Right ventricle myocardium inferior (tissue), 1 donor: ENCODE measurements at regions of chr17 and their contacts with region 1.

Region 1: DNA sequence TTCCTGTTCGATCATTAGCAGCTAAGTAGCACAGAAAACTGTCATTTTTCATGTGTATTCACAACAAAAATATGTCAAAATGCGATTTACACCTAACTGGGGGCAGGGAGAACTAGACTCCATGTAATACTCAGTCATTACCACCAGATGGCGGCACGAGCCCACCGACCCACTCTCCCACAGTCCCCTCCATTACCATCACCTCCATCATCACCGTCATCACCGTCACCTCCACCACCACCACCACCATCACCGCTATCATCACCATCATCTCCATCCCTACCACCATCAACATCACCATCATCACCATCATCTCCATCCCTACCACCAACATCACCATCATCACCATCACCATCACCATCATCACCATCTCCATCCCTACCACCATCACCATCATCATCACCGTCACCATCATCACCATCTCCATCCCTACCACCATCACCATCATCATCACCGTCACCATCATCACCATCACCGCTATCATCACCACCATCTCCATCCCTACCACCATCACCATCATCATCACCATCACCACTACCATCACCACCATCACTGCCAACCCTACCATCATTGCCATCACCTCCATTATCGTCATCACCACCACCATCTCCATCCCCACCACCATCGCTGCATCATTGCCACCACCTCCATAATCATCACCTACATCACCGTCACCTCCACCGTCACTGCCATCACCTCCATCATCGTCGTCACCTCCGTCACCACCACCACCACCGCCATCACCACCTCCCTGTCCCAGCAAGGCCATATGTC is 14.4 kb downstream of the NDUFAF8 start:
- DNase-seq: peak; percentile 82
- ATAC-seq: peak; percentile 51

Region 2: DNA sequence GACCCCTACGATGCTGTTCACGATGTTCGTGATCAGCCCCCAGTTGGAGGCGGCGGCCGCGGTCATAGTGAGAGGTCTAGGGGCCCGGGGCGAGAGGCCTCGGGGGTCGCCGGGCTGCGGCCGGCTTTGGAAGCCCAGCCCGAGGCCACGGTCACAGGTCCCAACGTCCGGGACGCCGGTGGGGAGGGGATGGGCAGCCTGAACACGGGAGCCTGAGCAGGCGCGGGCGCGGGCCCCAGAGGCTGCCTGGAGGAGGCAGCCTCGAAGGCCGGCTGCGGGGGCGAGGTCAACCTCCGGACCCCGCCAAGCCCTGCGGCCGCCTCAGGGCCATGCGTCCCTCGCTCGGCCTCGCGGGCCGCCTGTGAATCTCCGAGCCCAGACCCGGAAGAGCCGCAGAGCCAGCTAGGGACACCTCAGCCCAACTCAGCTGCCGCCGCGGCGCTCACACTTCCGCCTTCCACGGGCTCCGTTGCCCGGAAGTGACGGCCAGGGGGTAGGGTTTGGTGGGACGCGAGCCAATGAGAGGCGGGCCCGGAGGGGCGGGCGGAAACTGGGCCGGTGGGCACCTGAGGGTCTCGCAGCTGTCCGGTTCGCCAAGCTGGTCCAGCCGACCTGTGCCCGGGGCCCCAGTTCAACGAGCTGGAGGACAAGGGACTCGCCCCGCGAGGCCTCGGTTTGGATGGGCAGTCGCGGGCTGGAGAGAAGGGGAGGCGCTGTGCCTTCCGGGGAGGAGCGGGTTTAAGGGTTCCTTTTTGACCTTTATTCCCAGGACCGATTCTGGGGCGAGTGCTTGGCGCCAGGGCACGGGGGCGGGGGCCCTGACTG is 41.5 kb after region 1 on chr17 and contains the start of gene SLC38A10:
- intact Hi-C with region 1: loop called (anchors 5 kb)
- DNase-seq: peak; percentile 97
- ATAC-seq: peak; percentile 91
- total RNA-seq, gene SLC38A10: 44.6 TPM

Region 3: DNA sequence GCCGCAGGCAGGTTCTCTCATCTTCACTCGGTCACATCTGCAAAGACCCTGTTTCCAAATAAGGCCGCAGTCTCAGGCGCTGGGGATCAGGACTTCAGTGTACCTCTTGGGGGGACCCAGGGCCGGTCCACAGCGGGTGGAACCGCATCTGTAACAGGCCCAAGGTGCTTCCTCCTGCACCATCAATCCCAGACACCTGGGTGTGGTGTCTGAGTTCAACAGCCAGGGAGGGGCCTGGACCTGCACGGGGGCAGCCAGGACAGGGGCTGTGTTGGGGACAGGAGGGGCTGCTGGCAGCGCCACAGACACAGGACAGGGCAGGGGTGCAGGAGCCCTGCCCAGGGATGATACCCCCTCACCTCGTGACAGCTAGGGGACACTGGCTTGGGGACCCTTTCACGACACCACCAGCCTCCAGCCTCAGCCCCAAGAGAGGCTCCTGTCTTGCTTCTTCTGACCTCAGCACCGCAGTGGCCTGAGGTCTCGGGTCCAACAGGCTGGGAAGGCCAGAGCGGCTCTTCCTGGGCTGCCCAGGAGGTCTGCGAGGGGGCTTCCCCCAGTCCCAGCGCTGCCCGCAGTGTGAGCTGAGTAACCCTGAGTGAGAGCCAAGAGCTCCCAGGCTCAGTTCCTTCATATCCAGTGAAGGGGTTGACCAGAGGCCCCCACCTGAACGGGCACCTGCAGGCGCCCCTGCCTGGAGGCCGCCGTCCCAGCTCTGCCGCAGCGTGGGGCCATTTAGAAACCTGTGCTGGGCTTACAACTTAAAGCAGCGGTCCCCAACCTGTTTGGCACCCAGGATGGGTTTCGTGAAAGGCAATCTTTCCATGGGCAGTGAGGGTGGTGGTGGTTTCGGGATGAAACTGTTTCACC is 111.0 kb after region 1 on chr17:
- intact Hi-C with region 1: no loop called
- DNase-seq: peak; percentile 37
- ATAC-seq: no peak

Region 4: DNA sequence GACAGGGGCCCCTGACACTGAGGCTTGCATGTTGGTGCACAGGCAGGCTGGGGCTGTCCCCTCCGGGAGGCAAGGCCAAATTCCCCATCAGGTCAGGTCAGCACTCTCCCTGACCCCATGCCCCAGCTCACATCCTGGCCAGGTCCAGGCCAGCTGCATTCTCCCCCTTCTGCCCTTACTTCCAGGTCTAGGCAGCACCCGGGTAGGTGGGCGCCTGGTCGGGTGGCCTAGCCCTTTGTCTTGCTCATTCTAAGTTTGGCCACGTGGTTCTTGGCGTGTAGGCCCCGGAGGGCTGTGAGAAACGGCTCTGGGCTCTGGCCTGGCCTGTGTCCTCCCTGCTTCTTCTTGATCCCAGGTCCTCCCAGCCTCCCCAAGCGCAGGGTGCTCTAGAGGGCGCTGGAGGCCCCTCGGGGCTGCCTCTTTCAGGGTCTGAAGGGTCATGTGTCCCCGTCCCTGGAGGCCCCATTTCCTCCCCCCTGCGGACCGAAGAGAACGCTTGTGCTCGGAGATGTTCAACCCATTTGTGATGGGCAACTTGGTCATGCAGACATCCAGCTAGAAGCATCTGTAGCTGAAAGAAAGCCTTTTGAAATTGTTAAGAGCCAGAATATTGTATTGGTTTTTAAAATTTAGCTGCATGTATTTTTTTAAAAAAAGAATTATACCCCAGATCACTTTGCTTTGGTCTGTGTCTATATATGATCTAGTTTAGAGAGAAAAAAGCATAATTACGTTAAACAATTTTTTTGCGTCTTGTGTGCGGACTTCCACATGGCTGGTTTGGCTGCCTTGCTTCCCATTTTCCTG is 148.4 kb after region 1 on chr17:
- intact Hi-C with region 1: loop called (anchors 5 kb)
- DNase-seq: no peak
- ATAC-seq: no peak

Region 5: DNA sequence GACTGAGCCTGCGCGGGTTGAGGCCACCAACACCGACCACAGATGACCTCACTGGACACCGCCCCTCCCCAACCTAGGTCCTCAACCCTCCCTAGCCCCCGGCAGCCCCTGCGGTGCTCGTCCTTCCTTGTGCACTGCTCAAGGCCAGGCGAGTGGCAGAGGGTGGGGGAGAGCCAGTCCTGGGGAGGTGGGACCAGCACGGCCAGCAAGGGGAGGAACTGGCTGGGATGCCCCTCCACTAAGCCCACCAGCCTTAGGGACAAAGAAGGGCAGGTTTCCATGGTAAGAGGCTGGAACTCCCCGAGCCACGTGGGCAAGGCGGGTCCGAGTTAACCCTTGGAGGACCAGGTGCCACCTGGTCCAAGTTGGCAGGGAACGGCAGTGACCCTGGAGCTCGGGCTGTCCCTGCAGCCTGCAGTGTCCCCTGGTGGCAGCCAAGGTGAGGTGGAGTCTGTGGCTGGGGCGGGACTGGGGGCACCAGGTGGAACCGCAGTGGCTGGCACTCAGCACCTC is 283.9 kb after region 1 on chr17:
- intact Hi-C with region 1: loop called (anchors 5 kb)
- DNase-seq: peak; percentile 45
- ATAC-seq: peak; percentile 33

Region 6: DNA sequence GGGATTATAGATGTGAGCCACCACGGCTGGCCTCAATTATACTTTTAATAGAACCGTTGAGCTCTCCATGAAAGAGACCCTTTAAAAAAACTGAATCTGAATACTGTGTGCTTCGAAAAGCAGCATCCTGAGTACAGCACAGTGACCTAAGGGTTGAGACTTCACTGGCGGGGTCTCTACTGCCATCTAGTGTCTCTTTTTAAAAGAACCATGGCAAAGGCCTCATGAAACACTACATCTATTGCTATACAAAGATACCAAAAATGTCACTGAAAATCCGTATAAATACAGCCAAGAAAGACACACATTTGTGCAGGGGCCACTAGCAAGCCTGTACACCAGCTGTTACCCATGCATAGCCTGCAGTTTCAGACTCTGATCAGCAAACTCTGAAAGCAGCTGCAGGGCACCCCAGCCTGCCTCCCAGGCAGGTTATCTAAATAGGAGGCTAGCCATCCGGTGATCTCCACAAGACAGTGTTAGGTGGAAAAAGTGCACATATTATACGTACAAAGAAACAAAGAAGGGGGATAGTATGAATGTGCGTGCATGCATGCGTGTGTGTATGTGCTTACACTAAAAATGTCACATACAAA is 348.1 kb after region 1 on chr17:
- intact Hi-C with region 1: loop called (anchors 2 kb)
- DNase-seq: no peak
- ATAC-seq: peak; percentile 75